GM10248 (cell line): ENCODE measurements at regions of chr12 and their contacts with region 1.

Region 1: GRCh38 chr12:32755654-32756475 is at the start of gene YARS2:
- DNase-seq: peak; percentile 88
- CTCF ChIP-seq: peak; percentile 78

Region 2: GRCh38 chr12:32437095-32437515 is 318.8 kb before region 1 on chr12:
- CTCF ChIA-PET with region 1: interaction called, 10 read pairs
- POLR2A ChIA-PET with region 1: no interaction called
- DNase-seq: no peak
- CTCF ChIP-seq: no peak

Region 3: DNA sequence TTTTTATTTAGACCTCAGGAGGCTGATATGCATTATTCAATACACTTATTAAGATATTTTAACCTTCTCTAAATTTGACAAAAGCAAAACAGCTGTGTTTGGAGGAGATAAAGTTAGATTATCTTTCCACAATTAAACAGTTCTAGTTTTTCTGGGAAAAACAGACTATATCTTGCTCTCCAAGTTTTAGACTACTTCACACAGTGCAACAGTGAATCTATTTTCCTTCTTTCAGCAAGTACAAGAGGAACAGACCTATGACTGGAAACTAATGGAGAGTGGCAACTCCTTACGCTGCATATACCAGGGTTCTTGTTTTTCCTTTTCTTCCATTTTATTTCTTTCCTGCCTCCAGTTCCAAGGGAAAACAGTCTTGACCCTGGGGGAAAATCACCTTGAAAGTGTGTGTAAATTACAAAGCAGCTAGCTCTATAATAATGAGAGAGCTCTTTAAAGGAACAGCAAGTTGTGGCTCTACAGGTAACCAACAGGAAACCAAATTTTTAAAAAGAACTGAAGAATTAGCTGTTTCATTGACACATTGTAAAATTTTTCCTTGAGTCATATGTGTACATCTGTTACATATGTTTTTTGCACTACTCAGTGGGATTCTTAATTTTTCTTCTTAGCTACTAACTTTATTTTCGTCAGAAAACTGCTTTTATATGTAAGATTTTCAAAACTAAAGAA is 49.4 kb before region 1 on chr12:
- CTCF ChIA-PET with region 1: interaction called, 11 read pairs
- POLR2A ChIA-PET with region 1: no interaction called
- DNase-seq: no peak
- CTCF ChIP-seq: no peak

Region 4: GRCh38 chr12:32743264-32743663 is 12.6 kb before region 1 on chr12:
- CTCF ChIA-PET with region 1: interaction called, 23 read pairs
- POLR2A ChIA-PET with region 1: no interaction called
- DNase-seq: no peak
- CTCF ChIP-seq: no peak

Region 5: DNA sequence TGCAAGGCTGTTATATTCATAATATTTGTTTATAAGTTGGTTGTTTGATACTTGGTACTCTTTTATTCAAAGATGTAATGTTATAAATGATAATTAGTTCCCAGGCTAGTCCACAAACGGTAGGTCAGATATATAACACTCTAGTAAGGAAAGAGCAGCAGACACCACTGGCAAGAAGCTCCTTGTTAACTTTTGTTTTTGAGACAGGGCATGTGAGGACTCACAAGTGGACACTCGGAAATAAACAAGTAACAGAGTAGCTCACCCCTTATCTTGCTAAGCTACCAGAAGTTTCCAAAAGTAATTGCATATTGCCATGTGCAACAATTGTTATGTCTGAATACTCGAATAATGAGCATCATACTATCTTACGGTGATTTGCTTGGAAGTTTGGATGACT is 38.4 kb after region 1 on chr12:
- CTCF ChIA-PET with region 1: no interaction called
- POLR2A ChIA-PET with region 1: no interaction called
- DNase-seq: no peak
- CTCF ChIP-seq: no peak

Region 6: DNA sequence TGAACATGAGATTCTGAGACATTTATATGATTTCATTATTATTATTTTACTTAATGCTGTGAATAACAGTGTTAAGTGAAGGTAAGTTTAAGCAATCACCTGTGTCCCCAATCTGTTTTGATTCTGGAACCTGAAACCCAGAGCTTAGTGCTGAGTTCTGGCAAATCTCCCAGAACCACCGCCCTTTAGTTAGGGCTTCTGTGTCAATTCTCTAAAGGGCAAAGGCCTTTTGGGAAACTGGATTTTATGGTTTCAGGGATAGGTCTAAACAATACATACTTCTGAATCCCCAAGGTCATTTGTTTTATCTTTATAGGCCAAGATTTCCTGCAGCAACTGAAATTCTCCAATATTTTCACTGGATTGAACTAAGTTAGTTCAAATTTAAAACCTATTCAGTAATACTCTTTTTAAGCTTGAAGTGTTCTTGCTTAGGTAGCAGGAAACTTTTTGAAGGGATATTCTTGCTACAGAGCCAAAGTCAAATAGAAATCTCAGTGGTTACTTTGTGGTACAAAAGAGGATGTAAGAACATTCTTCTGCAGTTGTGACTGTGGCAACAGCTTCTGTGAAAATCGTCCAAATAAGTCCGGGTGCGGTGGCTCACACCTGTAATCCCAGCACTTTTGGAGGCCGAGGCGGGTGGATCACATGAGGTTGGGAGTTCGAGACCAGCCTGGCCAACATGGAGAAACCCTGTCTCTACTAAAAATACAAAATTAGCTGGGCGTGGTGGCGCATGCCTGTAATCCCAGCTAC is 150.7 kb after region 1 on chr12:
- CTCF ChIA-PET with region 1: interaction called, 14 read pairs
- POLR2A ChIA-PET with region 1: no interaction called
- DNase-seq: peak; percentile 53
- CTCF ChIP-seq: no peak

Region 7: GRCh38 chr12:34033628-34034282 is 1277.9 kb after region 1 on chr12:
- CTCF ChIA-PET with region 1: interaction called, 14 read pairs
- POLR2A ChIA-PET with region 1: no interaction called
- DNase-seq: peak; percentile 3
- CTCF ChIP-seq: peak; percentile 49